CD14-positive monocyte (primary cell): ENCODE measurements at regions of chr5 and their contacts with region 1.

Region 1: GRCh38 chr5:172878933-172879752 is 45.1 kb downstream of the ERGIC1 start:
- DNase-seq: no peak
- H3K4me3 ChIP-seq: no peak overlapping the region
- H3K4me3 Mint-ChIP-seq: no peak overlapping the region
- H3K27ac ChIP-seq: peak overlapping the region in 1 of 2 donors; percentile 83
- H3K27ac Mint-ChIP-seq: peak overlapping the region in 6 of 7 donors; percentile 17 to 87 (median 64)
- H3K4me1 ChIP-seq: peaks cover 37 to 39% of the 10 kb centered on the region in 2 donors
- H3K4me1 Mint-ChIP-seq: peaks cover 42% of the 10 kb centered on the region
- H3K27me3 ChIP-seq: no peaks in the 10 kb centered on the region
- H3K27me3 Mint-ChIP-seq: peaks cover 4 to 7% (median 7%) of the 10 kb centered on the region in 3 donors
- CTCF ChIP-seq: no peak

Region 2: GRCh38 chr5:172283020-172283861 is 595.9 kb before region 1 on chr5 and contains the start of gene UBTD2:
- intact Hi-C with region 1: no loop called
- DNase-seq: peak; percentile 54 to 64 (median 59)
- H3K4me3 ChIP-seq: peak within 1 kb of the TSS; percentile 56 to 95 (median 83)
- H3K4me3 Mint-ChIP-seq: peak within 1 kb of the TSS; percentile 92 to 95
- H3K27ac ChIP-seq: peak within 1 kb of the TSS in 1 of 2 donors; percentile 68
- H3K27ac Mint-ChIP-seq: peak within 1 kb of the TSS; percentile 65 to 93 (median 79)
- H3K4me1 ChIP-seq: peaks cover 15 to 33% of the 10 kb centered on the region in 2 donors
- H3K4me1 Mint-ChIP-seq: peaks cover 21% of the 10 kb centered on the region
- H3K27me3 ChIP-seq: peaks cover 2 to 12% of the 10 kb centered on the region in 2 donors
- H3K27me3 Mint-ChIP-seq: peaks cover 8 to 20% (median 14%) of the 10 kb centered on the region in 3 donors
- CTCF ChIP-seq: peak; percentile 74
- polyA plus RNA-seq, gene UBTD2: 2.3 to 3.2 (median 2.6) TPM

Region 3: GRCh38 chr5:172839669-172840431 is 39.3 kb before region 1 on chr5:
- intact Hi-C with region 1: loop called in 1 of 2 experiments (anchors 5 kb)
- DNase-seq: no peak
- H3K4me3 ChIP-seq: no peak overlapping the region
- H3K4me3 Mint-ChIP-seq: no peak overlapping the region
- H3K27ac ChIP-seq: no peak overlapping the region
- H3K27ac Mint-ChIP-seq: peak overlapping the region in 6 of 7 donors; percentile 1 to 80 (median 33)
- H3K4me1 ChIP-seq: peaks cover 30 to 36% of the 10 kb centered on the region in 2 donors
- H3K4me1 Mint-ChIP-seq: peaks cover 37% of the 10 kb centered on the region
- H3K27me3 ChIP-seq: no peaks in the 10 kb centered on the region
- H3K27me3 Mint-ChIP-seq: peaks cover 0 to 4% (median 0%) of the 10 kb centered on the region in 3 donors
- CTCF ChIP-seq: no peak